Activated T-helper 1 cell treated with anti-CD3 and anti-CD28 coated beads, Interleukin-12 subunit alpha, Interleukin-12 subunit beta, Interleukin-2, Interleukin-4 antibody, amounts not matched to agents 30 ng/mL and 10 ng/mL and 1 ng/mL, durations not matched to agents 14 hours and 24 hours and 36 hours (primary cell): ENCODE measurements at regions of chr2 and their contacts with region 1.

Region 1: GRCh38 chr2:136384531-136385303 is 266.8 kb upstream of the CXCR4 start:
- DNase-seq: peak; percentile 43
- H3K4me3 Mint-ChIP-seq: no peak overlapping the region
- H3K27ac Mint-ChIP-seq: peak overlapping the region; percentile 99
- H3K4me1 Mint-ChIP-seq: peaks cover 39% of the 10 kb centered on the region
- H3K27me3 Mint-ChIP-seq: no peaks in the 10 kb centered on the region

Region 2: DNA sequence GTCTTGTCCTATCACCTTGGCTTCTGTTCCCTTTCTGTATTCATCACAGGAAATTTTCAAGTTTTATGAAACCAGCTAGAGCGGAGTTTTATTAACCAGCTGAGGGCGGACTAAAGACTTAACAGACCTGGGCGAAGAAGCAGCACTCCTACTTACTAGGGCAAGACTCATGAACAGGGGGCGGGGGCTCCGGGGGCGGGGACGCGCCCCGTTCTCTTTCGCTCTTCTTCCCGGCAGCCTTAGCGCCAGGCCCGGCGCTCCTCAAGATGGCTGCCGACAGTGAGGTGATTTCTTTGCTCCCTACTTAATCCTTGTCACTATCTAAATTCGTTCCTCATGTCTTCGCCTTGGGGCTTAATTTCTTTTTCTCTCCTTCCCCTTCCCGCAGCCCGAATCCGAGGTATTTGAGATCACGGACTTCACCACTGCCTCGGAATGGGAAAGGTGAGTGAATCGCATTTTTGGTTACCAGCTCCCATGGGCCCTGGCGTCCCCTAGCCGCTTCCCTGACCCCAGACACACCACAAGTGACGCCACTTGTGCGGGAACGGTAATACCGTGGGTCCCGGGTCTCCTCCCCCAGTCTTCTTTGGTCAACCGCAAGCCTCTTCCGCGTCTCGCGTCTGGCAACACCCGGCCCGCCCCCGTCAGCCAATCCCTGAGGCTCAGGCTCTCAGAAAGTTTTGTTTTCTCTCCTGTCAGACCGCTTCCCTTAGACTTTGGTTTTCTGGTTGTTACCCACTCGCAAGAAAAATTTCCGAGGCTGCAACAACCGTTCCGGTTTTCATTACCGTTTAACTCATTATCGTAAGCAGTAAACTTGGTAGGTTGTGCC is 1332.5 kb before region 1 on chr2 and contains the start of gene RAB3GAP1:
- intact Hi-C with region 1: loop called (anchors 1 kb)
- DNase-seq: peak; percentile 94
- H3K4me3 Mint-ChIP-seq: peak within 1 kb of the TSS; percentile 92
- H3K27ac Mint-ChIP-seq: peak within 1 kb of the TSS; percentile 99
- H3K4me1 Mint-ChIP-seq: peaks cover 54% of the 10 kb centered on the region
- H3K27me3 Mint-ChIP-seq: peaks cover 1% of the 10 kb centered on the region
- total RNA-seq, gene RAB3GAP1: 23.4 and 25.6 TPM in 2 replicates

Region 3: DNA sequence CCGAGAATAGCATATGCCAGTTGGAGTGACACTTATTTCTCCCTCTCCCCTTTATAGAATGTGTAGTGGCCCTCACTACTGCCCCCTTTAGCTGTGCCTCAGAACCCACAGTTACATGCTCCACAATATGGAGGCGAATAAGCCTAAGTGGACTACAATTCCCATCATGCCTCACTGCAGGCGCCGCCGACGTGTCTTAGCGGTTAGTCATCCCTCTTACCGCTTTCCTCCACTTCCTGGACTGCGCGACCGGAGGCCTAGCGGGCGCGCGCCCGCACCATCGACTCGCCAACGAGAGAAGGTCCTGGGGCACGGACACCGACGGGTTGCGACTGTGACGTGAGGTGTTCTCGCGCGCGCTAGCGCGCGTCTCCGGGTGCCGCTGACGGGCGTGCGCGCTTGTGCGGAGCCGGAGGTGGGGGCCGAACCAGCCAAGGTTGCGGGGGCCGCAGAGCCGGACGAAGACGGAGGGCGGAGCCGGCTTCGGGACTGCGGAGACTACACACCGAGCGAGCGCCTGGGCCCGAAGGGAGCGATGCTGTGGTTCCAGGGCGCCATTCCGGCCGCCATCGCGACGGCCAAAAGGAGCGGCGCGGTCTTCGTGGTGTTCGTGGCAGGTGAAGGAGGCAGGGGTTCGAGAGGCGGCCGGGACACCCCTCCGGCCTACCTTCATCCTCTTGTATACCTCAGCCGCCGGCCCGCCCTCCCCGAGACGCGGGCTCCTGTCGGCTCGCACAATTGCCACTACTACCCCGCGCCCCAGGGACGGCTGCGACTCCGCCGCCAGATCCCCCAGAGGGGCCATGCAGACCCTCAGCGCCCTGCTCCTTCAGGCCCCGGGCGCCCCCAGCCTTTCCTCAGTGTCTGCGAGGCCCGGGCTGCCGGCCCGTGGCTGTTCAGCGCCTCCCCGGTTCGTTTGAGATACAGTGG is 643.1 kb before region 1 on chr2 and contains the start of gene UBXN4:
- intact Hi-C with region 1: loop called (anchors 2 kb)
- DNase-seq: peak; percentile 89
- H3K4me3 Mint-ChIP-seq: peak within 1 kb of the TSS; percentile 99
- H3K27ac Mint-ChIP-seq: peak within 1 kb of the TSS; percentile 100
- H3K4me1 Mint-ChIP-seq: peaks cover 36% of the 10 kb centered on the region
- H3K27me3 Mint-ChIP-seq: no peaks in the 10 kb centered on the region
- total RNA-seq, gene UBXN4: 115 and 121 TPM in 2 replicates

Region 4: GRCh38 chr2:135913727-135914365 is 470.9 kb before region 1 on chr2:
- intact Hi-C with region 1: loop called (anchors 1 kb)
- DNase-seq: no peak
- H3K4me3 Mint-ChIP-seq: no peak overlapping the region
- H3K27ac Mint-ChIP-seq: no peak overlapping the region
- H3K4me1 Mint-ChIP-seq: peaks cover 27% of the 10 kb centered on the region
- H3K27me3 Mint-ChIP-seq: no peaks in the 10 kb centered on the region

Region 5: GRCh38 chr2:136008205-136008865 is 376.4 kb before region 1 on chr2:
- intact Hi-C with region 1: loop called (anchors 2 kb)
- DNase-seq: peak; percentile 45
- H3K4me3 Mint-ChIP-seq: peak overlapping the region; percentile 2
- H3K27ac Mint-ChIP-seq: peak overlapping the region; percentile 32
- H3K4me1 Mint-ChIP-seq: peaks cover 47% of the 10 kb centered on the region
- H3K27me3 Mint-ChIP-seq: no peaks in the 10 kb centered on the region

Region 6: DNA sequence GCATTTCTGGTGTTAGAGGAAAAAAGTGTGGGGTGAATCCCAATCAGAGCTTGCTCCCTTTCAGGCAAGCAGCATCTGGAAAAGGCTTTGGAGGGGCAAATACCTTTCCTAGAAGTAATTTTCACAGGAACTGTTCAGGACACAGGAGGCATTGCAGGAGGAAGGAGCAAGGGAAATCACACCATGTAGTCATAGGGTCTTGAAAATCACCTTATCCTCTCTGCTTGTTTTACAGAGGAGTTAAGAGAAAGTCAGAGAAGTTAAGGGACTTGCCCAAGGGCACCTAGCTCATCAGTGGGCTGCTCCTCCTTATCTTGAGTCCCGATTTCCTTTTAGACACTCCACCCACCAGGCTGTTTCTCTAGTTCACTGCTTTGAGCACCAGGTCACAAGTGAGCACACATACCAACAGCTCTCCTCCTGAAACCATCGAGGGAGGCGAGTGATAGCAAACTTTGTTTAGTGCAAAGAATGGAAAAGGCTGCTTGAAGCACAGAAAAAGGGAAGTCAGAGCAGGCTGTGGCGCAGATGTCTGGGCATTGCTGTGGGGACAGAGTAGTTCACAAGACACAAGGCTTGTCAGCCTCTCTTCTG is 177.6 kb before region 1 on chr2:
- intact Hi-C with region 1: loop called (anchors 2 kb)
- DNase-seq: no peak
- H3K4me3 Mint-ChIP-seq: no peak overlapping the region
- H3K27ac Mint-ChIP-seq: peak overlapping the region; percentile 92
- H3K4me1 Mint-ChIP-seq: peaks cover 33% of the 10 kb centered on the region
- H3K27me3 Mint-ChIP-seq: peaks cover 2% of the 10 kb centered on the region

Region 7: GRCh38 chr2:136362676-136363390 is 21.9 kb before region 1 on chr2:
- intact Hi-C with region 1: loop called (anchors 1 kb)
- DNase-seq: no peak
- H3K4me3 Mint-ChIP-seq: peak overlapping the region; percentile 21
- H3K27ac Mint-ChIP-seq: peak overlapping the region; percentile 69
- H3K4me1 Mint-ChIP-seq: peaks cover 57% of the 10 kb centered on the region
- H3K27me3 Mint-ChIP-seq: peaks cover 4% of the 10 kb centered on the region

Region 8: GRCh38 chr2:136373029-136373428 is 11.7 kb before region 1 on chr2:
- intact Hi-C with region 1: no loop called
- DNase-seq: no peak
- H3K4me3 Mint-ChIP-seq: no peak overlapping the region
- H3K27ac Mint-ChIP-seq: no peak overlapping the region
- H3K4me1 Mint-ChIP-seq: peaks cover 40% of the 10 kb centered on the region
- H3K27me3 Mint-ChIP-seq: peaks cover 6% of the 10 kb centered on the region

Region 9: GRCh38 chr2:136407952-136408318 is 23.2 kb after region 1 on chr2:
- intact Hi-C with region 1: no loop called
- DNase-seq: no peak
- H3K4me3 Mint-ChIP-seq: no peak overlapping the region
- H3K27ac Mint-ChIP-seq: no peak overlapping the region
- H3K4me1 Mint-ChIP-seq: no peaks in the 10 kb centered on the region
- H3K27me3 Mint-ChIP-seq: peaks cover 39% of the 10 kb centered on the region

Region 10: DNA sequence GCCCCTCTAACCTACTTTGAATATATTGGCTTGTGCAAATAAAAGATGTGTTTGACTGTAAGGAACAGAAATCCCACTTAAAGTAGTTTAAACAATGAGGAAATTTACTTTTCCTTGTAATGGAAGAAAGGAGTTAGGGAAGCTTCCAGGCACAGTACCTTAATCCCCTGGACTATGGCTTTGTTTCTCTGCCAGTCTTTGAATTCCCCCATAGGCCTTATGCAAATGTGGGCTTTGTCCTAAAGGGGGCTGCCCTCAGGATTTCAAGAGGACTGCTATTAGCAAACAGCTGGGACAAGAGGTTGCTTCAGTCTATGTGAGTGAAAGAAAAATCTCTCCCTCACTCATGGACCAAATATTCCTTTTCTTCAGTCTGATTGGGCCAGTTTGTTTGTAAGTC is 125.5 kb after region 1 on chr2:
- intact Hi-C with region 1: no loop called
- DNase-seq: no peak
- H3K4me3 Mint-ChIP-seq: no peak overlapping the region
- H3K27ac Mint-ChIP-seq: no peak overlapping the region
- H3K4me1 Mint-ChIP-seq: no peaks in the 10 kb centered on the region
- H3K27me3 Mint-ChIP-seq: peaks cover 3% of the 10 kb centered on the region